Breast epithelium (tissue), 4 donors: ENCODE measurements at regions of chr22 and their contacts with region 1.

Region 1: GRCh38 chr22:39674536-39674935 is 104.0 kb downstream of the CACNA1I start:
- DNase-seq: no peak
- H3K4me3 ChIP-seq: no peak overlapping the region
- H3K27ac ChIP-seq: no peak overlapping the region
- H3K4me1 ChIP-seq: no peaks in the 10 kb centered on the region
- H3K27me3 ChIP-seq: no peaks in the 10 kb centered on the region
- CTCF ChIP-seq: no peak
- POLR2A ChIP-seq: no peak

Region 2: DNA sequence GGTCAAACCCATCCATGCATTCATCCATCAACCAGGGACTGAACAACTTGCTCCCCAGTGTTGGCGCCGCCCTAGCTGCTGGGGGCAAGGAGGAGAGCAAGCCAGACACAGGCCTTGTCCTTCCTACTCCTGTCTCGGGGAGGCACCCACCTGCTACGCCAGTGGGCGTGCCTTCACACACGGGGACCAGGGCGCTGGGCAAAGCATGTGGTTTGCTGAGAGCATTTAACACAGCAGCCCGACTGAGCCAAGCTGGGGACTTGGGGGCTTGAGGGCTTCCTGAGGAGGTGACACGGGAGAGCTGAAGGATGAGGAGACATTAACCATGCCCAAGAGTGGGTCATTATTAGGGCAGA is 73.4 kb before region 1 on chr22:
- intact Hi-C with region 1: loop called (anchors 2 kb)
- DNase-seq: no peak
- H3K4me3 ChIP-seq: no peak overlapping the region
- H3K27ac ChIP-seq: no peak overlapping the region
- H3K4me1 ChIP-seq: no peaks in the 10 kb centered on the region
- H3K27me3 ChIP-seq: peaks cover 0 to 6% of the 10 kb centered on the region in 2 donors
- CTCF ChIP-seq: no peak
- POLR2A ChIP-seq: no peak